Left ventricle myocardium superior (tissue), 1 donor: ENCODE measurements at regions of chr9 and their contacts with region 1.

Region 1: DNA sequence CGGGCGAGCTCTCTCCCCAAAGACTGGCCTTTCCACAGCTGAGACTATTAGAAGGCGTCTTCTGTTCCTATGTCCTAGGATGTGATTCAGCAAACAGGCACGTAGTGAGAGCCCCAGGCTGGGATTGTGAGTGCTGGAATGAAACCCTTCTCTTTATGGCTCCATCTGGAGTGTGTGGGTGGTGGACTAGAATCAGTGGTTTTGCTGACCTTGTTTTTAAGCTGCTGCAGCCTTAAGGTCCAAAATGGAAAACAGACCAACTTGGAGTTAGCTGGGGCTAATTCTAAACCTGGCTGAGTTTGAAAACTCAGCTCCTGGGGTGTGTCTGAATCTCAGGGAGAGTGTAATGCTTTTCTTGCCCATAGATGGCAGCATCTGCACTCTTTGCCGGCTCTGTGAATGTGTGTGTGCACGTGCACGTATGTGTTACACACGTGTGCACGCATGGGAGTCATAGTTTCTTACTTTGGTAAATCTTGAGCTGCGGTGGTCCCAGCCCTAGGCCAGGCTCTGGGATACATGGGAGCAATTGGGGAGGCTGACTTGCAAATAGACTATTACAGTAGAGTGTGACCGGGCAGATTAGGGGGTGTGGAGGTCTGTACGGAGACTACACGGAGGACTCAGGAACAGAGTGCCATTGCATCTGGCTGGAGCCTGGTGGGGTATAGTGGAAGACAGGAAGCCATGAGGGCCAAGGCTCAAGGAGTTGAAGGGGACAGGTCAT is 10.7 kb downstream of the GSN start:
- DNase-seq: peak; percentile 68
- ATAC-seq: peak; percentile 59

Region 2: GRCh38 chr9:121222524-121223171 is 56.0 kb before region 1 on chr9:
- intact Hi-C with region 1: loop called (anchors 2 kb)
- DNase-seq: no peak
- ATAC-seq: peak; percentile 41

Region 3: GRCh38 chr9:121376214-121376830 is 97.6 kb after region 1 on chr9:
- intact Hi-C with region 1: loop called (anchors 5 kb)
- DNase-seq: no peak
- ATAC-seq: no peak

Region 4: DNA sequence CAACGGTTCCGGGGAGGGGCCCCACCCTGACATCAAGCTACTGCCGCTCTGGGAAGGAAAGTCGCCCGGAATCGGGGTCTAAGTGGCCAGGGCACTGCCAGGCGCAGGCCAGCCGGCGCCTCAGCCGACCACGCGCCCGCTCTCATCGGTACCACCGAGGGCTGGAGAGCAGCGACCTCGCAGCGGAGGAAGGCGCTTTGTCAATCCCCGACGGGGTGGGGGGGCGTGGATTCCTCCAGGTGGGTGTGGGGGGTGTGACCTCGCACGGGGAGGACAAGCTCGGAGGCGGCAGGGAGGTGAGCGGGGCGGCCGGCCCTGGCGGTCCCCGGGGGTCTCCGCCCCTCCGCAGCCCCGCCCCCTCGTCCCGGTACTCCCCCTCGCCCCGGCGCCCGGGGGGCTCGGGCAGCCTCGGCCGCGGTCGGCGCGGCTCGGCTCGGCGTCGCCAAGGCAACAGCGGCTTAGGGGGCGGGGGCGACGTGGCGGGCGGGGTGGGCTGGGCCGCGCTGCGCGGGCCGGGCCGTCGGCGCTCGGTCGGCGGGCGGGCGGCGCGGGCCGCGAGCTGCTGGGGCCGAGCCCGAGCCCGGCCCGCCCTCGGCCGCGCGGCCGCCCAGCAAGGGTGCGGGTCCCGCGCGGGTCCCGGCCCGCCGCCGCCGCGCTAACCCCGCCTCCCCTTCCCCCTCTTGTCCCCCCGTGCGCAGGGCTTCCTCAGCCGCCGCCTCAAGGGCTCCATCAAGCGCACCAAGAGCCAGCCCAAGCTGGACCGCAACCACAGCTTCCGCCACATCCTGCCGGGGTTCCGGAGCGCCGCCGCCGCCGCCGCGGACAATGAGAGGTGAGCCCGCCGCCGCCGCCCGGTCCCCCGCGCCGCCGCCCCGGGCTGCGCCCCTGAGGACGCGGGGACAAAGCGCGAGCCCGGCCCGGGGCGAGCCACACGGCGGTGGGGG is 420.2 kb after region 1 on chr9:
- intact Hi-C with region 1: no loop called
- DNase-seq: peak; percentile 81
- ATAC-seq: peak; percentile 21